ENCODE measurements at regions of chr9 and their contacts with region 1.

Region 1: DNA sequence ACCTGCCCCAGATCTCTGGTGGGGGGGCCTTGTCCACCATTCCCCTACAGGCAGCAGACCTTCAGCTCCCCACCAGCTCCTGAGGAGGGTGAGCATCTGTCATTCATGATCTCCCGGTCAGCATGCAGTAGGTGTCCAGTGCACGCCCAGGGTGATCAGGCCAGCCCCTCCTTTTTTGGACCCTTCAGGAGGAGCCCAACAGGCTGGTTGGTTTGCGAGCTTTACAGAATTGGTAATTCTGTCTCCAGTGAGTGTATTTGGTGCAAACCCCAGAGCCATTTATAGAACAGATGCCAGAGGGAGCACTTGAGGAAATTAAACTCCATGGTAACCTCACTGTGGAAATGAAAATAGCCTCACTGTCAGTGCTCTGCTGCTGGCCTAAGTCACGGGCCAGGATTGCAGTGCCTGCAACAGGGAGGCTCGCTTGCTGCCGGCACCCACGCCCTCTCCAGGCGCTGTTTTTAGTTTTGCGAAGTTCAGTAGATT is 23.4 kb downstream of the WNK2 start:
- DNase-seq: no peak
- H3K4me3 ChIP-seq: no peak overlapping the region
- H3K27ac ChIP-seq: peak overlapping the region; percentile 38 to 50
- H3K4me1 ChIP-seq: peaks cover 22% of the 10 kb centered on the region
- H3K27me3 ChIP-seq: no peaks in the 10 kb centered on the region
- CTCF ChIP-seq: no peak
- POLR2A ChIP-seq: no peak

Region 2: GRCh38 chr9:93183609-93184431 is 23.6 kb before region 1 on chr9 and contains the start of gene WNK2:
- intact Hi-C with region 1: loop called (anchors 2 kb)
- DNase-seq: peak; percentile 45
- H3K4me3 ChIP-seq: peak within 1 kb of the TSS; percentile 45 to 69
- H3K27ac ChIP-seq: peak within 1 kb of the TSS; percentile 34 to 62
- H3K4me1 ChIP-seq: peaks cover 18% of the 10 kb centered on the region
- H3K27me3 ChIP-seq: no peaks in the 10 kb centered on the region
- CTCF ChIP-seq: no peak
- POLR2A ChIP-seq: peak; percentile 47
- total RNA-seq, gene WNK2: 77.9 to 136 TPM

Measured in prostate gland (tissue), 2 donors.